ENCODE measurements at regions of chr4 and their contacts with region 1.

Region 1: GRCh38 chr4:128863312-128864075 is 54.0 kb downstream of the JADE1 start:
- DNase-seq: peak; percentile 69 to 81
- H3K4me3 ChIP-seq: no peak overlapping the region
- H3K27ac ChIP-seq: peak overlapping the region in 1 of 3 donors; percentile 24
- H3K4me1 ChIP-seq: peaks cover 0 to 7% of the 10 kb centered on the region in 2 donors
- H3K27me3 ChIP-seq: no peaks in the 10 kb centered on the region
- CTCF ChIP-seq: peak; percentile 46 to 91 (median 78)
- POLR2A ChIP-seq: no peak

Region 2: DNA sequence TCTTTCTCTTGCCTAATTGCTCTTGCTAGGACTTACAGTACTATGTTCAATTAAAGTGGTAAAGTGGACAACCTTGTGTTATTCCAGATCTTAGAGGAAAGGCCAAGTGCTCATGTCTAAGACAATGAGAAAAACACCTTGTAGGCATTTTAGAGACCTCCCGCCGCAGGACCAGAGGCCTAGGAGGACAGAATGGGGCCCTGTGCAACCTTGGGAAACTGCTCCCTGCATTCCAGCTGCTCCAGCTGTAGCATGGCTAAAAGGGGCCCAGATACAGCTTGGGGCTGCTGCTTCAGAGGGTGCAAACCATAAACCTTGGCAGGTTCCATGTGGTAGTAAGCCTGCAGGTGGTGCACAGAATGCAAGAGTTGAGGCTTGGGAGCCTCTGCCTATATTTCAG is 676.9 kb before region 1 on chr4:
- intact Hi-C with region 1: loop called (anchors 10 kb)
- DNase-seq: no peak
- H3K4me3 ChIP-seq: no peak overlapping the region
- H3K27ac ChIP-seq: no peak overlapping the region
- H3K4me1 ChIP-seq: no peaks in the 10 kb centered on the region
- H3K27me3 ChIP-seq: no peaks in the 10 kb centered on the region
- CTCF ChIP-seq: no peak
- POLR2A ChIP-seq: no peak

Region 3: GRCh38 chr4:128454281-128455075 is 409.0 kb before region 1 on chr4:
- intact Hi-C with region 1: loop called (anchors 10 kb)
- DNase-seq: peak; percentile 89 to 91
- H3K4me3 ChIP-seq: no peak overlapping the region
- H3K27ac ChIP-seq: peak overlapping the region; percentile 53 to 62 (median 61)
- H3K4me1 ChIP-seq: peaks cover 7 to 21% of the 10 kb centered on the region in 2 donors
- H3K27me3 ChIP-seq: no peaks in the 10 kb centered on the region
- CTCF ChIP-seq: peak; percentile 27 to 91 (median 81)
- POLR2A ChIP-seq: no peak

Region 4: DNA sequence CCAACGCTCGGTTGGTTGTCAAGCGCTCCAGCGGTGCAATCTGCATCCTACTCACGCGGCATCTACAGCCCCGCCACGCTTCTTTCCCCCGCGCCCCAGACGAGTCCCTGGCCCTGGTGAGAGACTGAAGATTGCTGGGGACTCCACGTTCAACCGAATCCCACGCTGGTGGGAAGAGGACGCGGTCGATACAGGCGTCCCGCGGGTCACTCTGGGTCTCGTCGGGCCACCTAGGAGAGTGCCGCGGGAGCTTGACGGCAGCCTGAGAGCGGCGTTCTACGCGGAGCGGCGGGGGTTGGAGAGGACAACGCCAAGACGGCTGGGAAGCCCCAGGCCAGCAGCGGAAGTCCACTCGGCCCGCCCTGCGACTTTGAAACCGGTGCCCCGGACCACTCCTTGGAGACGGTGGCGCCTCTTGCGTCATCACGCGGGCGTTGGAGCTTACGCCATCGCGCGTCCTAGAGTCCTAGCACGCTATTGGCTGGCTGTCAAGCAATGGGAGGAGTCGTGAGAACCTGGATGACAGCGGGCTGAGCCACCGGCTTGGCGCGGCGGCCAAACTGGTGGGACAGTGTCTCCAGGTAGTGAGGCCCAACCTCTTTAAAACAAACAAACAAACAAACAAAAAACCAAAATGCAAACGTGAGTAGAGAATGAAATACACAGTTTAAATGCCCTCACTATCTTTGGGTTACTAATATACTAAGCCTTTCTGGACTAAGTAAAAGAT is 229.9 kb after region 1 on chr4 and contains the start of gene SCLT1:
- intact Hi-C with region 1: loop called (anchors 10 kb)
- DNase-seq: peak; percentile 99
- H3K4me3 ChIP-seq: peak within 1 kb of the TSS; percentile 18 to 75 (median 53)
- H3K27ac ChIP-seq: peak within 1 kb of the TSS; percentile 67 to 94 (median 91)
- H3K4me1 ChIP-seq: peaks cover 12 to 15% of the 10 kb centered on the region in 2 donors
- H3K27me3 ChIP-seq: no peaks in the 10 kb centered on the region
- CTCF ChIP-seq: no peak
- POLR2A ChIP-seq: peak in 1 of 2 donors; percentile 95
- total RNA-seq, gene SCLT1: 12.9 to 28.6 (median 20.8) TPM